ENCODE measurements at regions of chr1 and their contacts with region 1.

Region 1: DNA sequence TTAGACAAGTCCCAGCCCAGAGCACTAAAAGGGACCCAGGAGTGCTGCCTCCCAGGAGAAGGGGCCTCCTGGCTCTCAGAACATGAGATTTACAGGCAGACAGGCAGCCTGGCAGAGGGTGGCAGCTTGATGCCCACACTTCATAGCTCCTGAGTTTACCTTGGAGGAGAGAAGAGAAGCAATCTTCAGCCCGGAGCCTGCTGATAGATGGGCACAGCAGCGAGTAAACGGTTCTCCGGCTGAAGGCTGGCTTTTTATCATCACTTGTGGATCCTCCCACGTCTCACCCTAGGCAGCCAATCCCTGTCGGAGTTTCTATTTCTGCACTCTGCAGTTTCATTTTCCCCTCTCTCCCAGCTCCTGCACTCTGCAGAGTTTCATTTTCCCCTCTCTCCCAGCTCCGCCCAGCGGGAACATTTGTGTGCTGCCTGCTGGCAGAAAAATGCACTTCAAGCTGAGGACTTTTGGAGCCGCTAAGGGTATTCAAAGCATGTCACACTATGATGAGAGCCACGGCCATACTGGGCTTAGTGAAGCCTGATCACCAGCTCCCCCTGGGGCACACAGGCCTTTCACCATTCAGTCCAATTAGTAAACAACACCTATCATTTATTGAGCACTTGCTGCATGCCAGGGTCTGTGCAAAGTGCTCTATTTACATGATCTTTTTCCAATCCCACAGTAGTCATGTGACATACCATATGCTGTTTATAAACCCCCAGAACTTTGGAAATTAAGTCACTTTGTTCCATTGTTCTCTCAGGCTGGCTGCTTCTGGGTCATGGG is at the start of gene IFI6:
- DNase-seq: peak; percentile 95
- ATAC-seq: peak; percentile 98
- H3K4me3 ChIP-seq: peak within 1 kb of the TSS; percentile 53
- H3K27ac ChIP-seq: peak within 1 kb of the TSS; percentile 58
- H3K4me1 ChIP-seq: peaks cover 5% of the 10 kb centered on the region
- H3K27me3 ChIP-seq: peaks cover 2% of the 10 kb centered on the region; the same call in 1 of the 2 replicates
- CTCF ChIP-seq: peak; percentile 44
- POLR2A ChIP-seq: peak; percentile 79
- RAD21 ChIP-seq: peak; percentile 15; the same call in 1 of the 2 replicates
- total RNA-seq, gene IFI6: 6.7 and 7.3 TPM in 2 replicates

Region 2: DNA sequence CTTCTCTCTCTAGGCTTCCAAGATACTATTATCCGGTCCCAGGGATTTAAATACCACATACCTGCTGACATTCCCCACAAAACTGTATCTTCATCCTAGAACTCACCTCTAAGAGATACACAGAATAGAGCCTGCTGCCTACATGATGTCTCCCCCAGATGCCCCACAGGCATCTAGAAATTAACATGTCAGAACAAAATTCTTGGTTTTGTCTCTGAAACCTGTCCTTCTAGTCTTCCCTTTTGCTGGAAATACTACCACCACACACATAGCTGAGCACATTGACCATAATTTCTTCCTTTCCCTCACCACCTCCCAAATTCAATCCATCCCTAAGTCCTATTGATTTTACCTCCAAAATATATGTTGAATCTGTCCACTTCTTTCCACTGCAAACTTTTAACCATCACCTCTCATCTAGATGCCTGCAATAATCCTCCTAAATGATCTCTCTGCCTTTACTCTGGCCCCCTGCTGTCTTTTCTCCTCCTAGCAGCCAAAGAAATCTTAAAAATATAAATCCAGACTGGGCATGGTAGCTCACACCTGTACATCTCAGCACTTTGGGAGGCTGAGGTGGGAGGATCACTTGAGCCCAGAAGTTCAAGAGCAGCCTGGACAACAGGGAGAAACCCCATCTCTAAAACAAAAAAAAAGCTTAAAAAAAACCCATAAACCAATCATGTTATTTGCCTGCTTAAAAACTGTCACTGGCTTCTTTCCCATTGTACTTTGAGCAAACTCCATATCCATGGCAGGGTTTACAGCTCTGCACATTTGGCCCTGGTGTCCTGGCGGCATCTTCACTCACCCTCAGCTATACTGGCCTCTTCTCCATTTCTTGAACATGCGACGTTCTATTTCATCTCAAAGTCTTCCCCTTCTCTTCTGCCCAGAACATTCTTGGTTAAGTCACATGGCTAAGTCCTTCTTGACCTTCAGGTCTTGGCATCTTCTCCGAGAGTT is 47.4 kb after region 1 on chr1:
- CTCF ChIA-PET with region 1: interaction called, 6 read pairs
- POLR2A ChIA-PET with region 1: interaction called, 5 read pairs
- dilution Hi-C with region 1: no loop called
- in situ Hi-C with region 1: loop called (anchors 5 kb)
- intact Hi-C with region 1: loop called (anchors 1 kb)
- DNase-seq: peak; percentile 6
- ATAC-seq: peak; percentile 72
- H3K4me3 ChIP-seq: no peak overlapping the region
- H3K27ac ChIP-seq: no peak overlapping the region
- H3K4me1 ChIP-seq: no peaks in the 10 kb centered on the region
- H3K27me3 ChIP-seq: peaks cover 18% of the 10 kb centered on the region
- CTCF ChIP-seq: peak; percentile 48
- POLR2A ChIP-seq: no peak
- RAD21 ChIP-seq: peak; percentile 30; the same call in 1 of the 2 replicates

Region 3: DNA sequence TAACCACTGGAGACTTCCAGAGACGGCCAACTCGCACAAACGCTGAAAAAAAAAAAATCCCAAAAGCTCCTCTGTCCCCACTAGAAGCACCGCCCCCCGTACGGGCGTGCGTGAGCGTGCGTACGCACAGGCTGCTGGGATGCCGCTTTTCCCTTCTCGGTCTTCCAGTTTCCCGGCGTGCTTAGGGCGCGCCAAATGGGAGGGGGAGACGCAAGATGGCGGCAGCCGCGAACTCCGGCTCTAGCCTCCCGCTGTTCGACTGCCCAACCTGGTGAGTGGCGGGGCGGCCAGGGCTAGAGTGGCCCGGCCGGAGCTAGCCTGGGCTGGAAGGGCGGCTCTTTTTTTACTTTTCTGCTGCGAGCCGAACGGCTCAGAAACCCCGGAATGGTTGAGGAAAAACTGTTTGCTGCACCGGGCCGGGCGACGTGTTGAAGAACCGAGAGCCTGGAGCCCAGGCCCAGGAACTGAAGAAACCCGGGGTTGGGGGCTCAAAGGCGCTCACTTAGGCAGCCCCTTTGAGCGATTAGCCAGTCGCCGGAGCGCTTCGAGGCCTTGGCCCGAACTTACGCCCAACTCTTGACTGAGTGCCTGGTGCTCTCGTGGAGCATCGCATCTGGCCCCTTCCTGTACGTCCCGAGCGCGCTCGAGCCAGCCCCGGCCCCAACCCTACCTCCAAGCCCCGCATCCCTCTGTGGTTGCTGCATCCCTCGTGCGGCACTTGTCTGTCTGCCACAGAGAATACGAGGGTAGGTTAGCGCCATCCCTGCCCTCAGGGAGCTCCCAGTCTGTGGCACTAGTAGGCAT is 158.7 kb after region 1 on chr1 and contains the start of gene PPP1R8:
- CTCF ChIA-PET with region 1: no interaction called
- POLR2A ChIA-PET with region 1: no interaction called
- dilution Hi-C with region 1: no loop called
- in situ Hi-C with region 1: no loop called
- intact Hi-C with region 1: loop called (anchors 5 kb)
- DNase-seq: peak; percentile 95
- ATAC-seq: peak; percentile 99
- H3K4me3 ChIP-seq: peak within 1 kb of the TSS; percentile 98
- H3K27ac ChIP-seq: peak within 1 kb of the TSS; percentile 91
- H3K4me1 ChIP-seq: peaks cover 7% of the 10 kb centered on the region; the same call in 1 of the 2 replicates
- H3K27me3 ChIP-seq: no peaks in the 10 kb centered on the region
- CTCF ChIP-seq: no peak
- POLR2A ChIP-seq: peak; percentile 96
- RAD21 ChIP-seq: no peak
- total RNA-seq, gene PPP1R8: 60.5 and 80.1 TPM in 2 replicates

Region 4: DNA sequence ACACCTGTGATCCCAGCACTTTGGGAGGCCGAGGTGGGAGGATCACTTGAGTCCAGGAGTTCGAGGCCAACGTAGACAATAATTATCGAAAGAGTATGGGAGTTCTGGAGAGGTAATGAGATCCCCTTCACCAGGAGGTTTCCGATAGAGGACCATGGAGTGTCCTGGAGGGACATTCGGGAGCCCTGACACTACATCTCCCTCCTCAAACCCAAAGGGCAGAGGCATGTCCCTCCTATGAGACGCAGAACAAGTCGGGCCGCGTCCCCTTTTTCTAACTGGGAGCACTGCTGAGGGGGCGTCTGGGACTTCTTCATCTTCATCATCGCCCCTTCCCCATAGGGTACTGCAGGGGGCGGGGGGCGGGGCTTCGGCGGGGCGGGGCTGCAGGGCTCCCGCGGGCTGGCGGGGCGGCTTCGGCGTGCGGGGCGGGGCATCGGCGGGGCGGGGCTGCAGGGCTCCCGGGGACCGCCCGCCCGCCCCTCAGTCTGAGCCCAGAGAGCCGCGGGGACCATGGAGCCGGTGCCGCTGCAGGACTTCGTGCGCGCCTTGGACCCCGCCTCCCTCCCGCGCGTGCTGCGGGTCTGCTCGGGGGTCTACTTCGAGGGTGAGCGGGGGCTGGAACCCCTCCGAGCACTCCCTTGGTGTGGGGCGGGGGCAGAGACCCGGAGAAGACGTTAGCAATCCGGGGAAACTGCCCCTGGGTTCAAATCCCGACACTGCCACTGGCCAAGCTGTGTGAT is 200.1 kb after region 1 on chr1 and contains the start of gene THEMIS2:
- CTCF ChIA-PET with region 1: no interaction called
- POLR2A ChIA-PET with region 1: no interaction called
- dilution Hi-C with region 1: no loop called
- in situ Hi-C with region 1: no loop called
- intact Hi-C with region 1: no loop called
- DNase-seq: no peak
- ATAC-seq: peak; percentile 95
- H3K4me3 ChIP-seq: peak within 1 kb of the TSS; percentile 81
- H3K27ac ChIP-seq: no peak within 1 kb of the TSS; the same call in 1 of the 2 replicates
- H3K4me1 ChIP-seq: peaks cover 9% of the 10 kb centered on the region
- H3K27me3 ChIP-seq: no peaks in the 10 kb centered on the region
- CTCF ChIP-seq: no peak
- POLR2A ChIP-seq: no peak
- RAD21 ChIP-seq: no peak
- total RNA-seq, gene THEMIS2: 3.6 and 4.5 TPM in 2 replicates